Esophagus squamous epithelium (tissue), 5 donors: ENCODE measurements at regions of chr5 and their contacts with region 1.

Region 1: GRCh38 chr5:148740966-148741742 is 85.3 kb upstream of the ADRB2 start:
- DNase-seq: no peak
- H3K4me3 ChIP-seq: no peak overlapping the region
- H3K27ac ChIP-seq: peak overlapping the region in 1 of 4 donors; percentile 6
- H3K4me1 ChIP-seq: peaks cover 0 to 28% (median 11%) of the 10 kb centered on the region in 3 donors
- H3K27me3 ChIP-seq: no peaks in the 10 kb centered on the region
- CTCF ChIP-seq: peak; percentile 75 to 93 (median 80)
- POLR2A ChIP-seq: no peak

Region 2: DNA sequence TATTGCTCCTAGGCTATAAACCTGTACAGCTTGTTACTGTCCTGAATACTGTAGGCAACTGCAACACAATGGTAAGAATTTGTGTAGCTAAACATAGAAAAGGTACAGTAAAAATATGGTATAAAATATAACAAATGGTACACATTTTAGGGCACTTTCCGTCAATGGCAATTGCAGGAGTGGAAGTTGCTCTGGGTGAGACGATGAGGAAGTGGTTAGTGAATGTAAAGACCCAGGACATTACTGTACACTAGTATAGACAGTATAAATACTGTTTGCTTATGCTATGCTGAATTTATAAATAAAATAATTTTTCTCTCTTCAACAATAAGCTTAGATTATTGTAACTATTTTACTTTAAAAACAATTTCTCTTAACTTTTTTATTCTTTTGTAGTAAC is 69.7 kb after region 1 on chr5:
- intact Hi-C with region 1: loop called (anchors 10 kb)
- DNase-seq: no peak
- H3K4me3 ChIP-seq: no peak overlapping the region
- H3K27ac ChIP-seq: no peak overlapping the region
- H3K4me1 ChIP-seq: peaks cover 0 to 47% (median 13%) of the 10 kb centered on the region in 3 donors
- H3K27me3 ChIP-seq: no peaks in the 10 kb centered on the region
- CTCF ChIP-seq: no peak
- POLR2A ChIP-seq: no peak

Region 3: DNA sequence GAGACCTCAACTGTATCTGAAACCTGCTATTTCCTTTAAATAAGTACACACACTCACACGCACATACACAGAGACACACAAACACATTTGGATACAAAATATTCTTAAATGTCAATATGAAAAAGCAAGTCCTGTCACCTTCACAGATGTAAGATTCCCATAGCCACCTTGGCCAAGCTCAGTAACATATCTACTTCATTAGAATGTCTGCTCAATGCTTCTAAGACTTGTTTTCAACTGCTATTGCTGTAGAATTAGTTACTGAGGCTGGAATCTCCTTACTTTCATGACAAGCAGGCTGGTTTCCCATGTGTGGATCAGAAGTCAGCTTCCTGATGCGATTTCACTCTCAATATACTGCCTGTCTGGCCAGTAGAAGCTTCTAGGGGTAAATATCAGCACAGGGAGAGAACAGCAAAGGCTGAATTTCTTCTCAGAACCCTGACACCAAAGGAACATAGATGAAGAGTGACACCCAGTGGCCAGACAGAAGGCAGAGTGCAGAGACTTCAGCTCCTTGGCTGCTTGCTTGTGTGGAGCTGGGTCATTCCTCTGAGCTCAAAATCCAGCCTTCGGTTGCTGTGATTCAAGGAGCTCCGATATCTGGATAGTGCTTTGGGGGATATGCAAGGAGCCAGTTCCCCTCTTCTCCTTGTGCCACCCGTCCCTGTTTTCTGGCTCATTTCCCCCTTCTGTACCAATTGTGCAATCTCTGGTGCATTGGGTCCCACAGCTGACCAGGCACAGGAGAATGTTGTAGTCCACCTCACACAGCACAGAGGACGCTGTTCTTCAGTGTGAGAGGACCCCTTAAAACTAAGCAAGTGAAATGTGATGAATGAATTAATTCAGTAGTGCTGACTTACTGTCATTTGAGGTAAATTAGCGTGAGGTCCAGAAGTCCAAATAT is 373.5 kb after region 1 on chr5:
- intact Hi-C with region 1: loop called (anchors 5 kb)
- DNase-seq: no peak
- H3K4me3 ChIP-seq: no peak overlapping the region
- H3K27ac ChIP-seq: peak overlapping the region in 3 of 4 donors; percentile 4 to 62 (median 61)
- H3K4me1 ChIP-seq: peaks cover 4 to 22% (median 5%) of the 10 kb centered on the region in 3 donors
- H3K27me3 ChIP-seq: no peaks in the 10 kb centered on the region
- CTCF ChIP-seq: peak; percentile 23 to 90 (median 68)
- POLR2A ChIP-seq: no peak